HCT116 (cell line): ENCODE measurements at regions of chr5 and their contacts with region 1.

Region 1: DNA sequence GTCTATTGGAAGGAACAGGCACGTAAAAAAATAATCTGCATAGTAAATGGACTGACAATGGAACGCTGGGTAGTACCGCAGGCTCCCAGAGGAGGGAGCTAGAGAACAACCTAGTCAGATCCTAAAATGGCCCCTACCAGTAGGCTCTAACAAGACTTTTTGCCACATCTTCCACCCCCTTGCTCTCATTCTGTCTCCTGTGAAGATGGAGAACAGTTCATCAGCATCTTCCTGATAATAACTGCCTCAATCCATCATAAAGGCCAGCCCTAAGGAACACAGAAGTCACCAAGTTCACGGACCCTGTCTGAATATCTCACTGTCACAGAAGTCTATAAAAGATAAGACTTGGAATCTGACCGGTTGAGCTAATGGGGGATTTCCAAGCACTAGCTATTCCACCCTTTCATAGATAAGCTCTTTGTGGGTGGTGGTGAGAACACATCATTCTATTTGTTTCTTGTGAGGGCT is 133.4 kb downstream of the SLC1A3 start:
- DNase-seq: peak; percentile 73
- ATAC-seq: peak; percentile 61
- H3K4me3 ChIP-seq: no peak overlapping the region
- H3K27ac ChIP-seq: no peak overlapping the region
- H3K4me1 ChIP-seq: peaks cover 8 to 21% of the 10 kb centered on the region in 2 experiments
- H3K27me3 ChIP-seq: no peaks in the 10 kb centered on the region
- CTCF ChIP-seq: peak; percentile 80 to 95 (median 93)
- POLR2A ChIP-seq: no peak
- RAD21 ChIP-seq: peak; percentile 82

Region 2: DNA sequence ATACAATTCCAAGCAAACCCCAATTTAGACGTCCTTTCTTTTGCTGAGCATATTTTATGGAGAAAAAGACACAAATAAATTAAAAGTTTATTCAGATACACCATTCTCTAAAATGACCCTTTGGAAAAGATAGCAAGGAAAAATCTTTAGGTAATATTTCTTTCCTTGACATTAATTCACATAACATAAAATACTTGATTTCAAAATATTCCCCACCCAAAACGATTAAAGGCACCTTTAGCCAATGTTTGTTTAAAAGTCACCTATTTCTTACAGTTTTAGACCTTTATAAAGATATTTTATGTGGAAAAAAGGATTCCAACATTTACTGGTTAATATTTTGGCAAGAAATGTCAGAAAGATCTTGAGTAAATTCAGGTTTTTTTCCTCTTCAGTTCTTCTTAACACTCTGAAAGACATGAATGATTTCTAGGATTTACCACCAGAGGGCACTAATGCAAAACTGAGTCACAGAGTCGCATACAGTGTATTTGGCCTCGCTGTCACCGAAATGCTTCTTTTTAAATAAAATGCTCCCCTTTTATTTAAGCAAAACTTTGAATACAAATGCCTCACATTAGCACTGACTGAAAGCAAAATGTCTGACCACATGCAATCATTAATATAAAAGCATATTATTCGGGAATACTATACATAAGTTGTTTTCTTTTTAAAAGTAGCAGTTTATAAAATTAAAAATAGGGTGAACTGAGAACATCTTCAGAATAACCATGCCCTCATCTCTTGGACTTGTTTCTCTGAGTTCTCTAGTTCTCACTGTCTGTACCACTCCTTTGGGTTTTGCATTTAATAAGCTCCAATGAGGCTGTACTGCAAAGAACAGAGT is 10.9 kb before region 1 on chr5:
- CTCF ChIA-PET with region 1: interaction called, 10 read pairs
- POLR2A ChIA-PET with region 1: interaction called, 3 read pairs
- RAD21 ChIA-PET with region 1: no interaction called
- intact Hi-C with region 1: no loop called
- DNase-seq: no peak
- ATAC-seq: peak; percentile 82
- H3K4me3 ChIP-seq: no peak overlapping the region
- H3K27ac ChIP-seq: no peak overlapping the region
- H3K4me1 ChIP-seq: no peaks in the 10 kb centered on the region
- H3K27me3 ChIP-seq: no peaks in the 10 kb centered on the region
- CTCF ChIP-seq: peak; percentile 58 to 70 (median 62); a peak in 5 of 6 replicates
- POLR2A ChIP-seq: no peak
- RAD21 ChIP-seq: peak; percentile 60

Region 3: GRCh38 chr5:36944607-36945225 is 204.9 kb after region 1 on chr5:
- CTCF ChIA-PET with region 1: interaction called, 7 read pairs
- POLR2A ChIA-PET with region 1: interaction called, 3 read pairs
- RAD21 ChIA-PET with region 1: interaction called in 1 of 2 experiments, 3 read pairs
- intact Hi-C with region 1: loop called (anchors 5 kb)
- DNase-seq: peak; percentile 51
- ATAC-seq: no peak
- H3K4me3 ChIP-seq: no peak overlapping the region
- H3K27ac ChIP-seq: no peak overlapping the region
- H3K4me1 ChIP-seq: peaks cover under 1 to 3% of the 10 kb centered on the region in 2 experiments; a peak in 3 of 4 replicates
- H3K27me3 ChIP-seq: no peaks in the 10 kb centered on the region
- CTCF ChIP-seq: peak; percentile 15 to 68 (median 36); a peak in 4 of 6 replicates
- POLR2A ChIP-seq: no peak
- RAD21 ChIP-seq: peak; percentile 26; the same call in 1 of the 2 replicates